HEK293 (cell line): ENCODE measurements at regions of chr1 and their contacts with region 1.

Region 1: GRCh38 chr1:75632350-75632949 is 21.5 kb upstream of the SLC44A5 start:
- H3K4me3 ChIP-seq: no peak overlapping the region
- H3K27ac ChIP-seq: no peak overlapping the region
- H3K4me1 ChIP-seq: peaks cover 3% of the 10 kb centered on the region; the same call in 1 of the 2 replicates
- CTCF ChIP-seq: peak; percentile 21; the same call in 1 of the 2 replicates

Region 2: GRCh38 chr1:75265792-75266191 is 366.7 kb before region 1 on chr1:
- CTCF ChIA-PET with region 1: interaction called, 27 read pairs
- POLR2A ChIA-PET with region 1: no interaction called
- H3K4me3 ChIP-seq: no peak overlapping the region
- H3K27ac ChIP-seq: no peak overlapping the region
- H3K4me1 ChIP-seq: no peaks in the 10 kb centered on the region
- CTCF ChIP-seq: peak; percentile 35; the same call in 1 of the 2 replicates

Region 3: DNA sequence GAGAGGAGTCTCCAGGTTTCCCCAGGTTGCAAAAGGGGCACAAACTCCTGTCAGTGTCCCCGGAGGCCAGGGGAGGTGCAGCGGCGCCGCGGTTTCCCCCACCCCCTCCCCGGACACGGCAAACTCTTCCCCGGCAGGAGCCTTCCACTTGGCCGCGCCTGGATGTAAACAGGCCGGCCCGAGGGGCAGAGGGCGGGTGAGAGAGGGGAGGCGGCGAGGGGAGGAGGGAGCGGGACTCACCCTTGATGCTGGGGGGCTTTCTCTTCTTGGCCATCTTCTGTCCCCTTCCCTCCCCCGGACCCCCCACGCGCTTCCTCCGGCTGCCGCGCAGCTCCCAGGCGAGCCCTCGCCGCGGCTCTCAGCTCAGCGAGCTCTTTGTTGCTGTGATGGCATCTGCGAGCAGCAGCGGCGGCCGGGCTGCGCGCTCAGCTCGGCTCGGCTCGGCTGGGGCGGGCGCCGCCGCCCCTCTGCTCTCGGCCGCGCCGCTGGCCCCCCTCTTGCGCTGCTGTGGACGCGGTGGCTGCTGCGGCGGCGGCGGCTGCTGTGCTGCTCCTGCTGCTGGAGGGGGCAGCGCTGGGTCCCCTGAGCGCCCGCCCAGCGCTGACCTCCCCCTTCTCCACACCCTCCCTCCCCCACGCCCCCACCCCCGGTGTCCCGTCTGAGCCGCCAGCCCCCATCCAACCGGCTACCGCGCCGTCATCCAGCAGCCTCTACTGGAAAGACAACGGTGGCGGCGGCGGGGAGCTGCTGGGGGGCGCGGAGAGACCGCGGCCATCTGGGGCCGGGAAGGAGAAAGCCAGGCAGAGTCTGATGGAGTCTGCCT is 16.6 kb before region 1 on chr1:
- CTCF ChIA-PET with region 1: interaction called, 14 read pairs
- POLR2A ChIA-PET with region 1: interaction called, 3 read pairs
- H3K4me3 ChIP-seq: peak overlapping the region; percentile 90
- H3K27ac ChIP-seq: peak overlapping the region; percentile 59
- H3K4me1 ChIP-seq: peaks cover 13% of the 10 kb centered on the region
- CTCF ChIP-seq: no peak

Region 4: GRCh38 chr1:75643460-75643859 is 11.0 kb after region 1 on chr1:
- CTCF ChIA-PET with region 1: interaction called, 18 read pairs
- POLR2A ChIA-PET with region 1: no interaction called
- H3K4me3 ChIP-seq: no peak overlapping the region
- H3K27ac ChIP-seq: no peak overlapping the region
- H3K4me1 ChIP-seq: no peaks in the 10 kb centered on the region
- CTCF ChIP-seq: no peak

Region 5: DNA sequence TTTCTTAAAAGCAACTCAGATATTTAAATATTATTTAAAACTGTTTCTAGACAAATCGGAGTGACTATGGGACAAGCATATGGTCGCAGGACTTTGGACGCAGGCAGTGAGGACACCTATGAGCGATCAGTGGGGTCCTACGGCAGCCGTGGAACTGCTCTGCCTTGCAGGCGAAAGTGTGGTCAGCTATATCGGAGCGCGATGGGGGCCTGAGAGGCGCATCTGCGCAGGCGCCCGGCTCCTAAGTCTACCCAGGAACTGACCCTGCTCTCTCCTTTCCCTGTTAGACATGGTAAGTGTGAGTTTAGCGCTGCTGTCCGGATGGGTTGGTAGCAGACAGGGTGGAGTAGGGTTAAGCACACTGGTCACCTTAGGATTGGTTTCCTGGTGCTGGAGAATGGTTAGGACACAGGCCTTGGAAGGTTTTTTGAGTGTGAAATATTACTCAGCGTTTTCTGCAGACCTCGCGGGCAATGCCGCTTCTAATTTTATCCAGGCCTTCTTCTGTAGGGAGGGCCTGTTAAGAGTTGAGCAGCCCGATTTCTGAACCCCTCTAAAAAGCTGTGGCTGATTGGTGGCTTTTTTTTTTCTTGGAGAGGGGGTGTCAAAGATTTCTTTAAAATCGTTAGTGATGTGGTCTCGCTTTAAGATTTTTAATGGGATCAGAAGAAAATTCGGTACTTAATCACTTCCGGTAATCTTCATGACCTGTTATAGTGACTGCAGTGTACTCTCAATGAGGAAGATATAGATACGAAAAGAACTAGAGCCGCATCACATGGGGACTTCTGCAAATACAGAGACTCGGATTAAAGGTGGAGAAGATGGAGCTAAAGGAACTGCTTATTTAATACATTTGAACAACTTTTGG is 153.8 kb after region 1 on chr1 and contains the start of gene RABGGTB:
- CTCF ChIA-PET with region 1: no interaction called
- POLR2A ChIA-PET with region 1: no interaction called
- H3K4me3 ChIP-seq: peak within 1 kb of the TSS; percentile 79
- H3K27ac ChIP-seq: peak within 1 kb of the TSS; percentile 50
- H3K4me1 ChIP-seq: no peaks in the 10 kb centered on the region
- CTCF ChIP-seq: no peak